HAP-1 (cell line): ENCODE measurements at regions of chr15 and their contacts with region 1.

Region 1: DNA sequence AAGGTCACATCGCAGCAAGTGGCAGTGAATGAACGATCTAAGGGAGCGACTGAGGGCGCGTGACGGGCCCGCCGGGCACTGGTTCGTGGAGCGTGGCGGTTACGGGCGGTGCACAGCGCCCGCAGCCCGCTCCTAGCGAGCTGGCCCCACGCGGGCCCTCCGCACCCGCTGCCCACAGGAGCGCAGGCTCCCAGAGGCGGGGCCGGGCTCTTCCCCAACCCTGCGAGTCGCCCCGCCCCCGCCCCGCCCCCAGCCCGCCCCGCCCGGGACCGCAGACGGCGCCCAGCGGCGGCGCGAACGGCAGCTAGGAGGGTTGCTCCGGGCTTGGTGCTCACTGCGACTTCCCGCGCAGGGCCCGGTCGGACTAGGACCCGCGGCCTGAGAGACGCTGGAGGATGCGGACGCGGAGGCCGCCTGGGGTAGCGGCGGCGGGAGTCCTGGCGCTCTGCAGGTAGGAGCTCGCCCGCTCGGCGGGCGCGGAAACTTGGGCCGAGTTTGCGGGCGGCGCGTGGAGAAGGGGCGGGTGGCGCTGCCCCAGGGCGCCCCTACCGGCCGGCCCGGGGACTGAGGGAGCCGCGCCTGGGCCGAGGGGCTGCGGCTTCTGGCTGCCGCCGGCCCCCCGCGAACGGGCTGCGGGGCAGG is at the start of gene C15orf39:
- DNase-seq: peak; percentile 78 to 88
- H3K4me3 ChIP-seq: peak within 1 kb of the TSS; percentile 96
- H3K4me1 ChIP-seq: peaks cover 25% of the 10 kb centered on the region
- H3K27me3 ChIP-seq: no peaks in the 10 kb centered on the region

Region 2: DNA sequence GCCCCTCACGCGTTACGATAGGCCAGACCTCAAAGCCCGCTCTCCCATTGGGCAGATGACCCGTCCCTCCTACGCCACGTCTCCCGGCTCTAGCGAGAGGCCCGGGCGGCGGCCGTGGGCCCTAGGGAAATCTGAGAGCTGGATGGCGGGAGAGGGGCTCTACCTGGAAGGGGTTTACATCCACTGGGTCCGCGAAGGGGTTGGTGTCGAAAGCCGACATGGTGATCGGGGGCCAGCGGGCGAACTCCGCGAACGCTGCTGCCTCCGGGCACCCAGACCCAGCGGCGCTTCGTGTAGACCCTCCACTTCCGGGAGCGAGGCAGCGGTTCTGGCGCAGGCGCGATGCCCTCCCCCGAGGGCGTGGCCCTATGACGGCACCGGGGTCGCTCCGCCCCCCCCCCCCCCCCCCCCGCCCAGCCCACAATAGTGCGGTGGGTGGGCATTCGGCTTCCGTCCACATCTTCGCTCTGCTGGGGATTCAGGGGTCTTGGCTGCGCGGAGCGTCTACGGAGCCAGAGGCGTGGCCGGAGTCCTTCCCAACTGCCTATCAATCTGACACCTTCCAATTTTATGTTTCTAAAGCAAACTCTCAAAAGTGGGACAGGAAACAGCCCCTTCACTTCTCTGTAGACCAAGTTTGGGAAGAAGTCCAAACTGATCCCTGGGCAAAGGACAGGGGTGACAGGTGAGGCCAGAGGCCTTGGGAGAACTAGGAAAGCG is 328.5 kb before region 1 on chr15 and contains the start of gene SCAMP2:
- in situ Hi-C with region 1: no loop called
- DNase-seq: peak; percentile 100
- H3K4me3 ChIP-seq: peak within 1 kb of the TSS; percentile 100
- H3K4me1 ChIP-seq: peaks cover 34% of the 10 kb centered on the region
- H3K27me3 ChIP-seq: no peaks in the 10 kb centered on the region

Region 3: GRCh38 chr15:75029378-75030022 is 172.2 kb before region 1 on chr15:
- in situ Hi-C with region 1: loop called (anchors 5 kb)
- DNase-seq: peak; percentile 87 to 99
- H3K4me3 ChIP-seq: no peak overlapping the region
- H3K4me1 ChIP-seq: peaks cover 3% of the 10 kb centered on the region
- H3K27me3 ChIP-seq: no peaks in the 10 kb centered on the region